ENCODE measurements at regions of chr14 and their contacts with region 1.

Region 1: DNA sequence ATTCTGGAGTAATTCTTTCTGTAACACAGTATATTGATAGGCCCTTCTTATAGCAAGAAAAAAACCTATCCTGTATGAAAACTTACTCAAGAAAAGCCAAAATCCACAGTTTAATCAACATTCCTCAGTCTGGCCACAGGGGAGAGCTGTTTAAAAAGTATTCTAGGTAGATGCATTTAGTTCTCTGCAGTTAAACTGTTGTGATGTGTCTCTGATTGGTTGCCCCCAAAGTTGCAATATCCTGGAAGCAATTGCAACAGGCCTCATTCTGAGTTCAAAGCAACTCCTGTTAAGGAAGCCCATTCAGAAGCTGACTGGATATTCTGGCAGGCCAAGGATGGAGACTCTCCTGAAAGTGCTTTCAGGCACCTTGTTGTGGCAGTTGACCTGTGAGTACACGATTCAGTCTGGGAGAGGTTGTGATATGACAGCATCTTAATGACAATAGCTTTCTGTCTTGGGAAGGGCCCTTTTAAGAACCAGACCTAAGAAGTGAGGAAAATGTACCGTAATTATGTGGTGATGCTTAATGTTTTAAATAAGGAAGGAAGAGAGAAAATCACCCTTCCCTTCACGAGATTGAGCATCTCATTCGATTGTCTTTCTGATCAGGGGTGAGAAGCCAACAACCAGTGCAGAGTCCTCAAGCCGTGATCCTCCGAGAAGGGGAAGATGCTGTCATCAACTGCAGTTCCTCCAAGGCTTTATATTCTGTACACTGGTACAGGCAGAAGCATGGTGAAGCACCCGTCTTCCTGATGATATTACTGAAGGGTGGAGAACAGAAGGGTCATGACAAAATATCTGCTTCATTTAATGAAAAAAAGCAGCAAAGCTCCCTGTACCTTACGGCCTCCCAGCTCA is 420.7 kb downstream of the DAD1 start:
- DNase-seq: peak in 5 of 9 donors; percentile 1 to 31 (median 11)
- ATAC-seq: no peak
- H3K4me3 ChIP-seq: no peak overlapping the region
- H3K4me3 Mint-ChIP-seq: peak overlapping the region; percentile 62 to 88 (median 80)
- H3K27ac ChIP-seq: peak overlapping the region; percentile 41
- H3K27ac Mint-ChIP-seq: peak overlapping the region; percentile 48 to 91 (median 78)
- H3K4me1 ChIP-seq: no peaks in the 10 kb centered on the region
- H3K4me1 Mint-ChIP-seq: peaks cover 0 to 6% (median 3%) of the 10 kb centered on the region in 7 donors
- H3K27me3 ChIP-seq: no peaks in the 10 kb centered on the region
- H3K27me3 Mint-ChIP-seq: no peaks in the 10 kb centered on the region

Region 2: DNA sequence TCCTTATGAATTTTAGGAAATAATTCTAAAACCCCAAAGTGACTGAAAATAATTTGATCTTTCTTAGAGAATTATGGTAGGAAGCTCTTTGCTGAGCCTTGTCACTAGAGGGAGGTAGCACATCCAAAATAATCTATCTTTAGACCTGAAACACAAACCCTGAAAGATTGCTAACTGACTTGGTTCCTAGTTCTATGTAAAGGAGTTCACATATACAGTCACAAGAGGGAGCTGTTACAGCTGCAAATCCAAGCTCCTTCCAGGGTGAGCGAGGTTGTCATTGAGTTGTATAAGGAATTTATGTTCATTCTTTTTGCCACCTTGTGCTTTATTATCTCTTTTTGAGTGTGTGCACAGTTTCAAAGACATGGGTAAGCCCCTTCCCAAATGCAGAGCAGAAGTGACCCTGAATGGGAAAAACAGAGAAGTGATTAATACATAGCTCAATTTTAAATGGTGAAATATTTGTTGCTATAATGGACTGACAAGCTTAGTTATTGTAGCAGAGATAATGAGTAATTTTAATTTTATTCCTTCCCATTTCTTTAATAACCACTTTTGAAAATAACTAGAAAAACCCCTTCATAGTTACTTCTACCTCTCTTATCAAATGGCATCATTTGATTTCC is 32.8 kb after region 1 on chr14:
- CTCF ChIA-PET with region 1: interaction called, 3 read pairs
- POLR2A ChIA-PET with region 1: no interaction called
- intact Hi-C with region 1: loop called in 1 of 2 experiments (anchors 1 kb)
- DNase-seq: peak in 6 of 9 donors; percentile 18 to 56 (median 37)
- ATAC-seq: peak; percentile 84
- H3K4me3 ChIP-seq: no peak overlapping the region
- H3K4me3 Mint-ChIP-seq: peak overlapping the region in 3 of 10 donors; percentile 25 to 63 (median 33)
- H3K27ac ChIP-seq: no peak overlapping the region
- H3K27ac Mint-ChIP-seq: peak overlapping the region in 2 of 9 donors; percentile 54 to 75
- H3K4me1 ChIP-seq: no peaks in the 10 kb centered on the region
- H3K4me1 Mint-ChIP-seq: peaks cover 0 to 17% (median 8%) of the 10 kb centered on the region in 7 donors
- H3K27me3 ChIP-seq: no peaks in the 10 kb centered on the region
- H3K27me3 Mint-ChIP-seq: no peaks in the 10 kb centered on the region

Measured in naive thymus-derived CD4-positive, alpha-beta T cell (primary cell).